OCI-LY7 (cell line): ENCODE measurements at regions of chr11 and their contacts with region 1.

Region 1: GRCh38 chr11:78416305-78417178 is 1.1 kb downstream of the GAB2 start:
- DNase-seq: peak; percentile 75
- H3K4me3 ChIP-seq: peak overlapping the region; percentile 75
- H3K27ac ChIP-seq: no peak overlapping the region
- H3K4me1 ChIP-seq: peaks cover 20% of the 10 kb centered on the region
- CTCF ChIP-seq: peak; percentile 79

Region 2: GRCh38 chr11:78228467-78228866 is 188.1 kb before region 1 on chr11:
- CTCF ChIA-PET with region 1: no interaction called
- POLR2A ChIA-PET with region 1: interaction called, 4 read pairs
- intact Hi-C with region 1: loop called (anchors 2 kb)
- DNase-seq: peak; percentile 80
- H3K4me3 ChIP-seq: no peak overlapping the region
- H3K27ac ChIP-seq: no peak overlapping the region
- H3K4me1 ChIP-seq: peaks cover 33% of the 10 kb centered on the region
- CTCF ChIP-seq: peak; percentile 84

Region 3: DNA sequence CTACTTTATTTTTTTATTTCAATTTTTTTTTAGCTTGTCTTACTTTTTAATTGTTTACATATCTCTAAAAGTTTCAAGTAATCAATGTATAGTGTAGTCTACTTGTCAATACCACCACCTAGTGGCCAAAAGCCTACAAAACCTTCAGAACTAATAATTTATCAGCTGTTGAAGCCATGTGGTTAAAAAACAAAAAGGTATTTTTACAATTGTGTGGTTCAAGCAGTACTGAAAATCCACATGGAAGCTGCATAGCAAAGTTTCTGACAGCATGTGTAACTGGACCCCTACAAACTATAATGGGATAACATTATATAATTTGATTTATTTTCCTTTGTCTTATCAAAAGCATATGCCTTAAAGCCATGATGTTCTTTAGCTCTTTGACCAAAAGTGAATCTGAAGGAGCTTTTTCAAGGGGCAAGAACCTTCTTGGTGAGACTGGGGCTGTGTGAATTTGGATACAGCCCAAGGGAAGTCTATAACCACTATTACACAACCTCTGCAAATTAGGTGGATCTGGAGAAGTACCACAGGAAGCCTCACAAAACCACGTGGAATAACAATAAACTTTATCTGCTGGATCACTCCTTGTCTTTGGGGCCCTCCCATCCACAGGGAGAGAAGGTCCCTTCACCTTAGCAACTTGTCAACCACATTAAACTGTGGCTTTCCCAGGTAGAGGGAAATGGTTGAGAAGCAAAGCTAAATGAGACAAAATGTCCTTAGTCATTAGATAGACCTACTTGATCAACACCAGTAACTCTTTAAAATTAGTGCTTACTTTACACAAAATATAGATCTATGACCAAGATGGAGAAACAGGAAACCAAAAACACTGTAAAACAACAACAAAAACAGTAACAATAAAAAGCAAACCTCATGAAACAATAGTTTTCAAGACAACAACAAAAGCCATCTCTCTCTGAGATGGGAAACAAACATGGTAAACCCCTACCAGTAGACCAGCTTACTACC is 148.2 kb after region 1 on chr11:
- CTCF ChIA-PET with region 1: interaction called, 4 read pairs
- POLR2A ChIA-PET with region 1: no interaction called
- intact Hi-C with region 1: loop called (anchors 1 kb)
- DNase-seq: peak; percentile 73
- H3K4me3 ChIP-seq: no peak overlapping the region
- H3K27ac ChIP-seq: no peak overlapping the region
- H3K4me1 ChIP-seq: peaks cover 25% of the 10 kb centered on the region
- CTCF ChIP-seq: peak; percentile 86

Region 4: DNA sequence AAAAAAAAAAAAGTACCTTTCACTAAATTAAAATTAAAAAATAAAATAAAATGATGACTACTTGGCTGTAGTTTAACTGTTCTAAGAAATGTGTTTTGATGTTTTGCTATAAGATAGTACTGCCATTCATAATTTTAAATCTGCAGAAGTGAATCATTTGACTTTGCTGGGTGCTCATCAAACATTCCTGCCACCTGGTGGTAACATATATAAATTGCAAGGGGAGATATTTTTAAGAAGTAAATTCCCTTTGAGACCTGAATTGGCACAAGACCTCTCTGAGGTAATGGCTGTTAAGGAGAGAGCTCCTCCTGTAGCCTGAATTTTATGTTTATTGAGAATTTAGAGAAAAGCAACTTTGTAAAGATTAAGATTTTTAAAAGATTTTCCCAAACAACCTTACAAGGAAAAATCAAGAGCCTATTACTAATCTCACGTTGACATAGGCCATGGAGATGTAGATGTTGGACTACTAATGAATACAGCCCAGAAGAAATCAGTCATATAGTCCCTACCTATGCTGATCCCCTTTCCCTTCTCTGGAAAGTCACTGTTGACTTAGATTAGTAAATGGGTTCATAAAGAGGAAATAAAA is 170.0 kb after region 1 on chr11:
- CTCF ChIA-PET with region 1: no interaction called
- POLR2A ChIA-PET with region 1: no interaction called
- intact Hi-C with region 1: loop called (anchors 5 kb)
- DNase-seq: peak; percentile 49
- H3K4me3 ChIP-seq: no peak overlapping the region
- H3K27ac ChIP-seq: no peak overlapping the region
- H3K4me1 ChIP-seq: no peaks in the 10 kb centered on the region
- CTCF ChIP-seq: peak; percentile 84